Activated B cell treated with CpG ODN at 0.5 μM for 24 hours (primary cell): ENCODE measurements at regions of chr3 and their contacts with region 1.

Region 1: GRCh38 chr3:129026728-129027543 is 25.8 kb downstream of the EFCC1 start:
- DNase-seq: peak; percentile 83
- ATAC-seq: peak; percentile 97
- H3K4me3 Mint-ChIP-seq: peak overlapping the region; percentile 85
- H3K27ac Mint-ChIP-seq: peak overlapping the region; percentile 94
- H3K4me1 Mint-ChIP-seq: peaks cover 12% of the 10 kb centered on the region
- H3K27me3 Mint-ChIP-seq: no peaks in the 10 kb centered on the region
- CTCF ChIP-seq: no peak

Region 2: GRCh38 chr3:128993461-128994173 is 33.3 kb before region 1 on chr3 and contains the start of gene CFAP92:
- CTCF ChIA-PET with region 1: interaction called, 7 read pairs
- POLR2A ChIA-PET with region 1: interaction called, 7 read pairs
- intact Hi-C with region 1: loop called (anchors 1 kb)
- DNase-seq: peak; percentile 88
- ATAC-seq: peak; percentile 98
- H3K4me3 Mint-ChIP-seq: peak within 1 kb of the TSS; percentile 60
- H3K27ac Mint-ChIP-seq: peak within 1 kb of the TSS; percentile 41
- H3K4me1 Mint-ChIP-seq: peaks cover 28% of the 10 kb centered on the region
- H3K27me3 Mint-ChIP-seq: peaks cover 15% of the 10 kb centered on the region
- CTCF ChIP-seq: no peak
- total RNA-seq, gene CFAP92: not detected in 2 replicates